Esophagus muscularis mucosa (tissue), 4 donors: ENCODE measurements at regions of chr2 and their contacts with region 1.

Region 1: GRCh38 chr2:65432227-65433190 is at the start of gene SPRED2:
- DNase-seq: peak; percentile 98
- H3K4me3 ChIP-seq: peak within 1 kb of the TSS; percentile 82 to 96 (median 91)
- H3K27ac ChIP-seq: peak within 1 kb of the TSS; percentile 88 to 94 (median 93)
- H3K4me1 ChIP-seq: peaks cover 19 to 44% (median 39%) of the 10 kb centered on the region in 4 donors
- H3K27me3 ChIP-seq: no peaks in the 10 kb centered on the region
- CTCF ChIP-seq: no peak
- EP300 ChIP-seq: no peak
- POLR2A ChIP-seq: peak; percentile 2
- total RNA-seq, gene SPRED2: 17.4 to 25.6 (median 18.7) TPM

Region 2: GRCh38 chr2:65064728-65065552 is 367.6 kb before region 1 on chr2:
- intact Hi-C with region 1: loop called (anchors 10 kb)
- DNase-seq: no peak
- H3K4me3 ChIP-seq: peak overlapping the region in 1 of 4 donors; percentile 4
- H3K27ac ChIP-seq: peak overlapping the region; percentile 19 to 68 (median 42)
- H3K4me1 ChIP-seq: peaks cover 87 to 95% (median 91%) of the 10 kb centered on the region in 4 donors
- H3K27me3 ChIP-seq: no peaks in the 10 kb centered on the region
- CTCF ChIP-seq: peak; percentile 61 to 78 (median 72)
- EP300 ChIP-seq: peak; percentile 27
- POLR2A ChIP-seq: no peak

Region 3: DNA sequence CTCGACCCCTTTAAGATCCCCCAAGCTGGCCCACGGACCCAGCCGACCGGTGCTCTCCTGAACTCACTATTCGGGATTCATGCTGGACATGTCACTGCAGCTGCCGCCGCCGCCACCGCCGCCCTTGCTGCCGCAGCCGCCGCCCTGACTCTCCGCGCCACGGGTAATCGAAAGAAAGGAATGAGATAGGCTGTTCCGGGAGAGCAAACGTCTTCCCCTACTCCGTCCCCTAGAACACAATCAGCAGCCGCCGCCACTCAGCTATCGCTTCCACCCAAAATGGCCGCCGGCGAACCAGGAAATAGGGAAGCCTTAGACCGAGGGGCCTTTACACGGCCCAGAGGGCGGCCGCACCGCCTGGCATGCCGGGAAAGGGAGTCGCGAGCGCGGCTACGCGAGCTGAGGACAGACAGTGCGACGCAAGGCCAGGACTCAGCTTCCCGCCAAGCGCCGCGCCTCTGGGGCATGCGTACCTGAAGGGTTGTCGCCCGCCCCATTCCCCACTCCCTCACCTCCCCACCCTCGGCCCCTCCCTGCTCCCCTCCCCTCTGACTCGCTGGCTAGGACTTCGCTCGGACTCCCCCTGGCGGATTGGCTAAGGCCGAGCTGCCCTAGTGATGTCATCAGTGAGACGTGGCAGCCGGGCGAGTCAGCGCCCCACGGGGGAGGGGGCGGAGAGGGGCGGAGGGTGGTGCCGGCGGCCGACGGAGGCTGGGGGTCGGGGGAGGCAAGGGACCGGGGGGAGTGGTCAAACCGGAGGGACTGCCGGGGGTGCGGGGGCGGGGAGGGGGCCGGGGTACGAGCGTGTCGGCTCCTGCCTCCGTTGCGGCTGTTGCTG is 302.5 kb before region 1 on chr2 and contains the start of gene RAB1A:
- intact Hi-C with region 1: loop called (anchors 10 kb)
- DNase-seq: peak; percentile 100
- H3K4me3 ChIP-seq: peak within 1 kb of the TSS; percentile 66 to 98 (median 94)
- H3K27ac ChIP-seq: peak within 1 kb of the TSS; percentile 94 to 100 (median 98)
- H3K4me1 ChIP-seq: peaks cover 31 to 47% (median 44%) of the 10 kb centered on the region in 4 donors
- H3K27me3 ChIP-seq: no peaks in the 10 kb centered on the region
- CTCF ChIP-seq: peak; percentile 24 to 51 (median 39)
- EP300 ChIP-seq: no peak
- POLR2A ChIP-seq: peak; percentile 92
- total RNA-seq, gene RAB1A: 72.1 to 91.4 (median 86.0) TPM

Region 4: DNA sequence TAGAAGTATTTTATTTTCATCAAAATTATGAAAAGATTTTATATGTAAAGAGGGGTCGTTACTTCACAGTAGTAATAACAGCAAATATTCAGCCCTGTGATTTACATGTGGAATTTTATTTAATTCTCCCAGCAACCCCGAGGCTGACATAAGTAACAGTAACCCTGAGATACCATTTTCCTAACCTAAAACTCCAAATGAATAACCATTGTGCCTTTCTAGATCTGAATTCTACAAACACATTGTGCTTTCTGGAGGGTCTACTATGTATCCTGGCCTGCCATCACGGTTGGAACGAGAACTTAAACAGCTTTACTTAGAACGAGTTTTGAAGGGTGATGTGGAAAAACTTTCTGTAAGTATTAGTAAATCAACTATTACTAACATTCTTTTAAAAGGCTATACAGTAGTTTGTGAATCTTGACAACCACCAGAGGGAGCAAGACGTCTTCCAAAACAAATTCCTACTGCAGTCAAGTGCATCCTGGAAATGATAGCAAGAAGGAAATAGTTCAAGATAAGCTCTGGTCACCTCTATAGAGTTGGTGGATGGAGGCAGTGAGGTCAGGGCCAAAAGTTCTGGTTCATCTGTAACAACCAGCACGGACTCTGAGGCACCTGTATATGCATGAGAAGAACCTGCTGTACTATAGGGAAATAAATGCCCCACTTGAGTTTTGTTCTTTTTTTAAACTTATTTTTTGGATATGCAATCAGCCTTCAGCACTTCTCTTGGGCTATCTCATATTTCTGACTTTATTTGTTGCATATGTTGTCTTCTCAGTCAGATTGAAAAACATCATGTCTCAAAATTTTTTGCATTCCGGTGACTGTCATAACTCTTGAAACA is 167.5 kb before region 1 on chr2:
- intact Hi-C with region 1: loop called (anchors 5 kb)
- DNase-seq: no peak
- H3K4me3 ChIP-seq: no peak overlapping the region
- H3K27ac ChIP-seq: no peak overlapping the region
- H3K4me1 ChIP-seq: peaks cover 0 to 9% (median 4%) of the 10 kb centered on the region in 4 donors
- H3K27me3 ChIP-seq: no peaks in the 10 kb centered on the region
- CTCF ChIP-seq: peak; percentile 63 to 73 (median 65)
- EP300 ChIP-seq: no peak
- POLR2A ChIP-seq: no peak

Region 5: GRCh38 chr2:65382776-65383357 is 49.6 kb before region 1 on chr2:
- intact Hi-C with region 1: loop called (anchors 5 kb)
- DNase-seq: no peak
- H3K4me3 ChIP-seq: peak overlapping the region; percentile 12 to 37 (median 30)
- H3K27ac ChIP-seq: peak overlapping the region; percentile 50 to 72 (median 60)
- H3K4me1 ChIP-seq: peaks cover 32 to 60% (median 47%) of the 10 kb centered on the region in 4 donors
- H3K27me3 ChIP-seq: no peaks in the 10 kb centered on the region
- CTCF ChIP-seq: peak in 2 of 3 experiments; percentile 11 to 30
- EP300 ChIP-seq: no peak
- POLR2A ChIP-seq: no peak

Region 6: GRCh38 chr2:65554765-65555591 is 122.5 kb after region 1 on chr2:
- intact Hi-C with region 1: loop called (anchors 10 kb)
- DNase-seq: no peak
- H3K4me3 ChIP-seq: no peak overlapping the region
- H3K27ac ChIP-seq: no peak overlapping the region
- H3K4me1 ChIP-seq: peaks cover 0 to 9% (median 4%) of the 10 kb centered on the region in 4 donors
- H3K27me3 ChIP-seq: no peaks in the 10 kb centered on the region
- CTCF ChIP-seq: no peak
- EP300 ChIP-seq: no peak
- POLR2A ChIP-seq: no peak